ENCODE measurements at regions of chr7 and their contacts with region 1.

Region 1: DNA sequence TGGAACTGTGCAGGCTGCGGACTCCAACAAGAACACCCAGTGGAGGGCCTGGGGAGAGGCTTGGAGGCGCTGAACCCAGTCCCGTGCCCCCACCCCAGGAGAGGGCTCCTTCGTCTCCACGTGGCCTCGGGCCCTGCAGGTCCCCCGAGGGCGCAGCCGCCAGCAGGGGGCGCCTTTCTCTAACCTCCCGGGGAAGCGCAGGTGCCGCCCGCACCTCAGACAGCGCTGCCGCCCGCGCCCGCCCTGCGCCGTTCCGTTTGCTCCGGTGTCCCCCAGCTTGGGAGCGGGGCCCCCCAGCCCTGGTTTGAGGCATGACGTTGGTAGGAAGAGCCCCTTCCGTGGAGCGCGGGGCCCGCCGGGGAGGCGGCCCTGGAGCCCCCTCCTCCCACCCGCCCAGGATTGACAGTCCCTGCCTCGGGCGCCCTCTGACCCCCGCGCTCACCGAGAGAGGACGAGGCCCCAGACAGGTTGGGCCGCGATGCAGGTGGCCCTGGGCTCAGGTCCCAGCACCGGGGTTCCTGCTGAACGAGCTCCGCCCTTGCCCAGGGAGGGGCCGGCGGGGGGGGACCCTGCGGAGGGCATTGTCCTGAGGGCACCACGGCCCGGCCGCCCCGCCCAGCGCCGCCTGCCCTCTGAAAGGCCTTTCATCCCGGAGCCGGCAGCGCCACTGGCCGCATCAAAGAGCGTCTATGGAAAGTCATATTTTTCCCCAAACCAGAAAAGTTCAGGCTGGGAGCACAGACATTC is 42.8 kb downstream of the FOXL3 start:
- DNase-seq: peak; percentile 92
- H3K4me3 Mint-ChIP-seq: no peak overlapping the region
- H3K27ac Mint-ChIP-seq: no peak overlapping the region
- H3K4me1 Mint-ChIP-seq: peaks cover 5% of the 10 kb centered on the region
- H3K27me3 Mint-ChIP-seq: no peaks in the 10 kb centered on the region

Region 2: GRCh38 chr7:220151-220841 is 112.5 kb before region 1 on chr7:
- CTCF ChIA-PET with region 1: no interaction called
- POLR2A ChIA-PET with region 1: no interaction called
- intact Hi-C with region 1: no loop called
- DNase-seq: no peak
- H3K4me3 Mint-ChIP-seq: no peak overlapping the region
- H3K27ac Mint-ChIP-seq: no peak overlapping the region
- H3K4me1 Mint-ChIP-seq: no peaks in the 10 kb centered on the region
- H3K27me3 Mint-ChIP-seq: no peaks in the 10 kb centered on the region

Region 3: DNA sequence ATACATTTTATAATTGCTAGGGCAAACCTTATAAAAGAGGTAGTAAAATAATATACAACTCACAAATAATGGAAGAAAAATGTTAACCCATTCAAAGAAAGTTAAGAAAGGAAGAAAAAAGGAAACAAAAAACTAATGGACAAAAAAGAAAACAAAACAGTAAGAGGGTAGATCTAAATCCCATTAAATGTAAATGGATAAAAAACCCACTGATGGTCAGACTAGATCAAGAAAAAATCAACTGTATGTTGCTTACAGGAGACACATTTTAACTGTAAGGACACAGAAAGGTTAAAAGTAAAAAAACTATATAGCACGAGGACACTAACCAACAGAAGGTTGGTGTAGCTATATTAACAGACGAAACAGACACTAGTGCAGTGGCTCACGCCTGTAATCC is 24.8 kb before region 1 on chr7:
- CTCF ChIA-PET with region 1: no interaction called
- POLR2A ChIA-PET with region 1: no interaction called
- intact Hi-C with region 1: no loop called
- DNase-seq: no peak
- H3K4me3 Mint-ChIP-seq: no peak overlapping the region
- H3K27ac Mint-ChIP-seq: no peak overlapping the region
- H3K4me1 Mint-ChIP-seq: no peaks in the 10 kb centered on the region
- H3K27me3 Mint-ChIP-seq: peaks cover 10% of the 10 kb centered on the region

Region 4: DNA sequence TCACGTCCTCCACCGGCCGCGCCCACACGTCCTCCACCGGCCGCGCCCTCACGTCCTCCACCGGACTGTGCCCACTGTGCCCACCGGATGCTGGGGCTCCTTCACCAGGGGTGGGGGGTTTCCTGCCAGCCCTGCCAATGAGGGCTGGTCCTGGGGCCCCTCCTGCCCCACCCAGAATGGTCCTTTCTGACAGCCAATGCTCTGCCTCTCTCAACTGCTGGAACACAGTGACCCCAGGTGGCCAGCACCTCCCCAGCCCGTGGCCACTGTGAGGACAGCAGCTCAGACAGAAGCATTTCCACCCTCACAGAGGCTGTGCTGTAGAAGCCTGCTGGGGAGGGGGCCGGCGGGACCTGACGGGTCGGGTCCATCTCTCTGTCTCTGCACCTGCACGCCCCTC is 303.6 kb after region 1 on chr7:
- CTCF ChIA-PET with region 1: interaction called, 3 read pairs
- POLR2A ChIA-PET with region 1: no interaction called
- intact Hi-C with region 1: loop called (anchors 5 kb)
- DNase-seq: peak; percentile 61
- H3K4me3 Mint-ChIP-seq: no peak overlapping the region
- H3K27ac Mint-ChIP-seq: no peak overlapping the region
- H3K4me1 Mint-ChIP-seq: peaks cover 12% of the 10 kb centered on the region
- H3K27me3 Mint-ChIP-seq: no peaks in the 10 kb centered on the region

Region 5: GRCh38 chr7:774161-775109 is 441.6 kb after region 1 on chr7:
- CTCF ChIA-PET with region 1: interaction called, 17 read pairs
- POLR2A ChIA-PET with region 1: no interaction called
- intact Hi-C with region 1: no loop called
- DNase-seq: peak; percentile 76
- H3K4me3 Mint-ChIP-seq: no peak overlapping the region
- H3K27ac Mint-ChIP-seq: no peak overlapping the region
- H3K4me1 Mint-ChIP-seq: no peaks in the 10 kb centered on the region
- H3K27me3 Mint-ChIP-seq: no peaks in the 10 kb centered on the region